IMR-90 (cell line): ENCODE measurements at regions of chr5 and their contacts with region 1.

Region 1: GRCh38 chr5:40688127-40688761 is 8.5 kb downstream of the PTGER4 start:
- DNase-seq: peak; percentile 89
- ATAC-seq: peak; percentile 86
- H3K4me3 ChIP-seq: no peak overlapping the region
- H3K27ac ChIP-seq: peak overlapping the region; percentile 26; the same call in 1 of the 2 replicates
- H3K4me1 ChIP-seq: peaks cover 5% of the 10 kb centered on the region
- H3K27me3 ChIP-seq: no peaks in the 10 kb centered on the region
- CTCF ChIP-seq: peak; percentile 91
- POLR2A ChIP-seq: no peak; the same call in 1 of the 2 replicates
- RAD21 ChIP-seq: peak; percentile 98

Region 2: GRCh38 chr5:39578887-39579497 is 1109.3 kb before region 1 on chr5:
- CTCF ChIA-PET with region 1: no interaction called
- POLR2A ChIA-PET with region 1: no interaction called
- dilution Hi-C with region 1: no loop called
- in situ Hi-C with region 1: no loop called
- intact Hi-C with region 1: loop called (anchors 1 kb)
- DNase-seq: peak; percentile 49
- ATAC-seq: no peak
- H3K4me3 ChIP-seq: no peak overlapping the region
- H3K27ac ChIP-seq: no peak overlapping the region
- H3K4me1 ChIP-seq: no peaks in the 10 kb centered on the region
- H3K27me3 ChIP-seq: peaks cover 7% of the 10 kb centered on the region
- CTCF ChIP-seq: peak; percentile 61
- POLR2A ChIP-seq: no peak
- RAD21 ChIP-seq: peak; percentile 64

Region 3: DNA sequence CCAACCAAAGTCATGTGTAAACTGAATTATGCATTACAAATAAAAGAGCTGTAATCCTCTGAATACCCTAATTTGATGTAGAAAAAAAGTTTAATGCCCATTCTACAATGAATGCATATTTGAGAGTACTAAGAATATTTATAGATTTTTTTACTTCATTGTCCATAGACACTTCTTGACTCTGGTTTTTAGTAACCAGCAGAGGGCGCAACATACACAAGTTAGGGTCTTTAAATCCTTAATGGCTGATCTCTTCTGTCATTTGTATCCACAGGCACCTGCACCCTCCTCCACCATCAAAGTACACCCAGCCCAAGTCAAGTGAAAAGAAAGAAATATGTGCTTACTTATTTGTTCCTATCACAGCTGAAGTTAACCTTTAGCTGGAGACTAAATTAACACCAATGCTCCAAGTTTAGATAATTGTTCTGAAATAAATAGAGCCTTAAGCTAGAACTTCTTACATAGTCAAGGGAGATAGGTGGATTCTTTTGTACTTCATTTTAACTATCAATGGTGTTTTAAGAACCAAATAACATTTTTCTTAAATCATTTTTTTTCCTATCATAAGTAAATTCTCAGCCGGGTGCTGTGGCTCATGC is 739.3 kb before region 1 on chr5:
- CTCF ChIA-PET with region 1: no interaction called
- POLR2A ChIA-PET with region 1: no interaction called
- dilution Hi-C with region 1: no loop called
- in situ Hi-C with region 1: loop called (anchors 5 kb)
- intact Hi-C with region 1: loop called (anchors 1 kb)
- DNase-seq: peak; percentile 76
- ATAC-seq: peak; percentile 77
- H3K4me3 ChIP-seq: no peak overlapping the region
- H3K27ac ChIP-seq: no peak overlapping the region
- H3K4me1 ChIP-seq: no peaks in the 10 kb centered on the region
- H3K27me3 ChIP-seq: no peaks in the 10 kb centered on the region
- CTCF ChIP-seq: peak; percentile 70
- POLR2A ChIP-seq: no peak
- RAD21 ChIP-seq: peak; percentile 78

Region 4: GRCh38 chr5:40165794-40166728 is 522.2 kb before region 1 on chr5:
- CTCF ChIA-PET with region 1: interaction called, 4 read pairs
- POLR2A ChIA-PET with region 1: no interaction called
- dilution Hi-C with region 1: no loop called
- in situ Hi-C with region 1: no loop called
- intact Hi-C with region 1: loop called (anchors 5 kb)
- DNase-seq: peak; percentile 19
- ATAC-seq: no peak
- H3K4me3 ChIP-seq: no peak overlapping the region
- H3K27ac ChIP-seq: no peak overlapping the region
- H3K4me1 ChIP-seq: no peaks in the 10 kb centered on the region
- H3K27me3 ChIP-seq: no peaks in the 10 kb centered on the region
- CTCF ChIP-seq: peak; percentile 27; the same call in 1 of the 2 replicates
- POLR2A ChIP-seq: no peak
- RAD21 ChIP-seq: peak; percentile 53

Region 5: GRCh38 chr5:40736103-40736875 is 48.0 kb after region 1 on chr5:
- CTCF ChIA-PET with region 1: no interaction called
- POLR2A ChIA-PET with region 1: no interaction called
- dilution Hi-C with region 1: no loop called
- in situ Hi-C with region 1: no loop called
- intact Hi-C with region 1: loop called (anchors 1 kb)
- DNase-seq: peak; percentile 74
- ATAC-seq: peak; percentile 74
- H3K4me3 ChIP-seq: no peak overlapping the region
- H3K27ac ChIP-seq: no peak overlapping the region
- H3K4me1 ChIP-seq: peaks cover 14% of the 10 kb centered on the region
- H3K27me3 ChIP-seq: no peaks in the 10 kb centered on the region
- CTCF ChIP-seq: peak; percentile 88
- POLR2A ChIP-seq: no peak
- RAD21 ChIP-seq: peak; percentile 89

Region 6: GRCh38 chr5:40841068-40841805 is 153.0 kb after region 1 on chr5 and contains the start of gene CARD6:
- CTCF ChIA-PET with region 1: no interaction called
- POLR2A ChIA-PET with region 1: no interaction called
- dilution Hi-C with region 1: no loop called
- in situ Hi-C with region 1: no loop called
- intact Hi-C with region 1: no loop called
- DNase-seq: peak; percentile 31
- ATAC-seq: peak; percentile 56
- H3K4me3 ChIP-seq: peak within 1 kb of the TSS; percentile 45
- H3K27ac ChIP-seq: peak within 1 kb of the TSS; percentile 87
- H3K4me1 ChIP-seq: 0 out of 2 replicates have a peak, but pooled peaks cover 2% of the 10 kb centered on the region
- H3K27me3 ChIP-seq: no peaks in the 10 kb centered on the region
- CTCF ChIP-seq: no peak
- POLR2A ChIP-seq: no peak
- RAD21 ChIP-seq: no peak
- total RNA-seq, gene CARD6: 4.2 and 4.3 TPM in 2 replicates

Region 7: DNA sequence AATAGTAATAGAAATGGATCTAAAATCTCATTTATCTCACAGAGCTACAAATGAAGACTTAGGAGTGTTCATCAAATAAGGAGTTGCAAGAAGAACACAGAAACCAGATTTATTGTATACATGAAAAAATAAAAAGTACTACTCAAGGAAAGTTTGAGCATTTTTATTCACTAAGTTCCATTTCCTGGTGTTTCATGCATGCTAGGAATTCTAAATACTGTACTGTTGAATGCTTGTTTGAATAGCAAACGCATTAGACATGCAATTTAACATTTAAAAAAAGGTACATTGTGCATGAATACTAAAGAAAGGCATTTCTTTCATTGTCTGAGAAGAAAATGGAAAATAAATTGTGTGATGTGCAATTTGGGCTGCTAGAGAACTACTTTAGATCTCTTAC is 473.0 kb after region 1 on chr5:
- CTCF ChIA-PET with region 1: no interaction called
- POLR2A ChIA-PET with region 1: no interaction called
- dilution Hi-C with region 1: no loop called
- in situ Hi-C with region 1: no loop called
- intact Hi-C with region 1: no loop called
- DNase-seq: peak; percentile 77
- ATAC-seq: peak; percentile 89
- H3K4me3 ChIP-seq: no peak overlapping the region
- H3K27ac ChIP-seq: peak overlapping the region; percentile 95
- H3K4me1 ChIP-seq: peaks cover 12% of the 10 kb centered on the region
- H3K27me3 ChIP-seq: no peaks in the 10 kb centered on the region
- CTCF ChIP-seq: no peak
- POLR2A ChIP-seq: no peak
- RAD21 ChIP-seq: no peak